IMR-90 (cell line): ENCODE measurements at regions of chr16 and their contacts with region 1.

Region 1: DNA sequence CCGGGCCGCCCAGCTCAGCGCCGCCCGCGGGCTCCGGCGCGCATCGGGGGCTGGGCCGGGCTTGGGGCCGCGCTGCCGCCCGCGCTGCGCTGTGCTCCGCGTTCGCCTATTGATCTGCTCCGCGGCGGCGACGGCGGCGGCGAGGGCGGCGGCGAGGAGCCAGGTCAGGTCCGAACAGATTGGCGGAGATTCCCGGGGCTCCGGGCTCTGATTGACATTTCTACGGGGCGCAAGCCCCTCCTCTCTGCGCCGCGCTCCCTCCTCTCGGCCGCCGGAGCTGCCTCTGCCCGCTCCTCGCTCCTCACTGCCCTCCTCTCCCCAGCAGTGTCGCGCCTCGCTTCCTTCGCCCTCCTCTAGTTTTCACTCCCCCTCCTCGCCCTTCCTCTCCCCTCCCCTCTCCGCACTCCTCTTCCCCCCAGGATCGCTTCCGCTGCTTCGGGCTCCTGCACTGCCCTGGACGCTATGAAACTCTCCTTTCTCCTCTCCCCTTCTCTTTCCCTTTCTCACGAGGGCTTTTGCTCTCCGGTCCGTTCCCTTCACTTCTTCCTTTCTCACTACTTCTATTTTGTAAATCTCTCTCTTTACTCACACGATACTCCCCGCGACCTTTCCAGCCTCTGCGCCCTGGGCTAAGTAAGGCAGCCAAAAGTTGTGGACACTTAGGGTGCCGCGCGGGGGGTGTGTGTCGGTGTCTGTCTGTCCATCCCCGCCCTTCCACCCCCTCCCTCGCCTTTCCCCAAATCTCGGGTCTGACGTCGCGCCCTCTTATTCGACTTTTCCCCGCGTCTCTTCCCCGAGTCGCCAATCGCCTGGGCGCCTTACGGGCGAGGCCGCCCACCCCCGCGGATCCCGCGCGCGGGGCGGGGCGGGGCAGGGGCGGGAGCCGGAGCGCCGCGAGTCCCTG is at the start of gene IRX3:
- DNase-seq: peak; percentile 4
- ATAC-seq: peak; percentile 58
- H3K4me3 ChIP-seq: peak within 1 kb of the TSS; percentile 71
- H3K27ac ChIP-seq: no peak within 1 kb of the TSS; the same call in 1 of the 2 replicates
- H3K4me1 ChIP-seq: peaks cover 4% of the 10 kb centered on the region; the same call in 1 of the 2 replicates
- H3K27me3 ChIP-seq: peaks cover 97% of the 10 kb centered on the region
- CTCF ChIP-seq: no peak
- POLR2A ChIP-seq: no peak
- RAD21 ChIP-seq: no peak
- total RNA-seq, gene IRX3: not detected in 2 replicates

Region 2: GRCh38 chr16:53884748-53885147 is 401.6 kb before region 1 on chr16:
- CTCF ChIA-PET with region 1: no interaction called
- POLR2A ChIA-PET with region 1: no interaction called
- dilution Hi-C with region 1: no loop called
- in situ Hi-C with region 1: no loop called
- intact Hi-C with region 1: no loop called
- DNase-seq: peak; percentile 22
- ATAC-seq: no peak
- H3K4me3 ChIP-seq: no peak overlapping the region
- H3K27ac ChIP-seq: no peak overlapping the region
- H3K4me1 ChIP-seq: no peaks in the 10 kb centered on the region; the same call in 1 of the 2 replicates
- H3K27me3 ChIP-seq: no peaks in the 10 kb centered on the region
- CTCF ChIP-seq: no peak
- POLR2A ChIP-seq: no peak
- RAD21 ChIP-seq: no peak

Region 3: GRCh38 chr16:54929090-54930004 is 643.0 kb after region 1 on chr16:
- CTCF ChIA-PET with region 1: no interaction called
- POLR2A ChIA-PET with region 1: no interaction called
- dilution Hi-C with region 1: no loop called
- in situ Hi-C with region 1: loop called (anchors 25 kb)
- intact Hi-C with region 1: loop called (anchors 10 kb)
- DNase-seq: peak; percentile 94
- ATAC-seq: peak; percentile 91
- H3K4me3 ChIP-seq: peak overlapping the region; percentile 53
- H3K27ac ChIP-seq: no peak overlapping the region
- H3K4me1 ChIP-seq: no peaks in the 10 kb centered on the region
- H3K27me3 ChIP-seq: peaks cover 38% of the 10 kb centered on the region
- CTCF ChIP-seq: no peak
- POLR2A ChIP-seq: no peak
- RAD21 ChIP-seq: no peak